CD8-positive, alpha-beta T cell (primary cell): ENCODE measurements at regions of chr1 and their contacts with region 1.

Region 1: GRCh38 chr1:2525920-2526823 is at the start of gene PANK4:
- DNase-seq: peak; percentile 77 to 96 (median 87)
- ATAC-seq: peak; percentile 85
- H3K4me3 ChIP-seq: peak within 1 kb of the TSS; percentile 85 to 98
- H3K4me3 Mint-ChIP-seq: peak within 1 kb of the TSS; percentile 98
- H3K27ac ChIP-seq: peak within 1 kb of the TSS; percentile 50 to 76
- H3K27ac Mint-ChIP-seq: peak within 1 kb of the TSS; percentile 97
- H3K4me1 ChIP-seq: peaks cover 66% of the 10 kb centered on the region
- H3K4me1 Mint-ChIP-seq: peaks cover 49% of the 10 kb centered on the region
- H3K27me3 ChIP-seq: peaks cover 7 to 14% of the 10 kb centered on the region in 2 experiments
- H3K27me3 Mint-ChIP-seq: peaks cover 2% of the 10 kb centered on the region
- CTCF ChIP-seq: no peak
- total RNA-seq, gene PANK4: 44.1 to 44.8 TPM

Region 2: GRCh38 chr1:1919304-1920056 is 606.7 kb before region 1 on chr1:
- CTCF ChIA-PET with region 1: no interaction called
- POLR2A ChIA-PET with region 1: no interaction called
- intact Hi-C with region 1: loop called in 1 of 2 experiments (anchors 10 kb)
- DNase-seq: peak; percentile 97 to 100 (median 99)
- ATAC-seq: peak; percentile 89
- H3K4me3 ChIP-seq: peak overlapping the region; percentile 39 to 74
- H3K4me3 Mint-ChIP-seq: peak overlapping the region; percentile 47
- H3K27ac ChIP-seq: peak overlapping the region in 1 of 2 experiments; percentile 28
- H3K27ac Mint-ChIP-seq: peak overlapping the region; percentile 5
- H3K4me1 ChIP-seq: peaks cover 17% of the 10 kb centered on the region
- H3K4me1 Mint-ChIP-seq: peaks cover 3% of the 10 kb centered on the region
- H3K27me3 ChIP-seq: no peaks in the 10 kb centered on the region
- H3K27me3 Mint-ChIP-seq: no peaks in the 10 kb centered on the region
- CTCF ChIP-seq: no peak

Region 3: GRCh38 chr1:2205191-2205952 is 320.8 kb before region 1 on chr1:
- CTCF ChIA-PET with region 1: no interaction called
- POLR2A ChIA-PET with region 1: no interaction called
- intact Hi-C with region 1: loop called in 1 of 2 experiments (anchors 2 kb)
- DNase-seq: peak; percentile 91 to 97 (median 95)
- ATAC-seq: peak; percentile 93
- H3K4me3 ChIP-seq: peak overlapping the region; percentile 39 to 61
- H3K4me3 Mint-ChIP-seq: peak overlapping the region; percentile 69
- H3K27ac ChIP-seq: peak overlapping the region; percentile 19 to 47
- H3K27ac Mint-ChIP-seq: no peak overlapping the region
- H3K4me1 ChIP-seq: peaks cover 14% of the 10 kb centered on the region
- H3K4me1 Mint-ChIP-seq: peaks cover 8% of the 10 kb centered on the region
- H3K27me3 ChIP-seq: no peaks in the 10 kb centered on the region
- H3K27me3 Mint-ChIP-seq: no peaks in the 10 kb centered on the region
- CTCF ChIP-seq: no peak

Region 4: DNA sequence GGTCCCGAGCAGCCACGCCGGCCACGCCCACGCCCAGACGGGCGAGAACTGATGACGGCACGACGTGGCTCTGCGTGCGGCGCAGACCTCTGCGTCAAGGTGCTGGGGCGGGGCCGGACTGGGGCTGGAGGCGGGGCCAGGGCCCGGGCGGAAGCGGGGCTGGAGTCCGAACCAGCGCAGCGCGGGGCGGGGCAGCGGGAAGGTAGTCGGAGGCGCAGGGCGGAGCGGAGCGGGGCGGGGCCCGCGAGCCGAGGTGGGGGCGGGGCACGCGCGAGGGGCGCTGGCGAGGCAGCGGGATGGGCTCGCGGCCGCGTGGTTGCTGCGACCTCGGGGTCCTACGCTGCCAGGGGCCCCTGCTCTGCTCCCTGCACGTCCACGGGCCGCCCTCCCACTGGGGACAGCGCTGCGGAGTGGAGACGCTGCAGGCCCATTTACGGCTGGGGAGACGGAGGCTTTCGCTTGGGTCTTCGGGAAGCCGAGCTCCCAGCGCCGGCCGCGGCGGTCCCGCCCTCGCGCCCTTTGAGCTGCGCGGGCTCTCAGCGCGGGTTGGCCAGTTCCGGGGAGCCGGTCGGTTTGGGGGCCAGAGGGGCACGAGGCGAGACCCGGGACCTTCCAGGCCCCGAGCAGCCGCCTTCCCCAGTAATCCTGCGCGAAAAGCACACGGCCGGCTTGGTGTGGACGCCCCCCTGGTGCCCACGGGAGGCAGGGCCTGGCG is 113.5 kb before region 1 on chr1 and contains the start of gene PEX10:
- CTCF ChIA-PET with region 1: interaction called, 20 read pairs
- POLR2A ChIA-PET with region 1: interaction called, 17 read pairs
- intact Hi-C with region 1: loop called (anchors 1 kb)
- DNase-seq: peak; percentile 97 to 100 (median 99)
- ATAC-seq: peak; percentile 91
- H3K4me3 ChIP-seq: peak within 1 kb of the TSS; percentile 64 to 89
- H3K4me3 Mint-ChIP-seq: peak within 1 kb of the TSS; percentile 86
- H3K27ac ChIP-seq: peak within 1 kb of the TSS; percentile 81 to 93
- H3K27ac Mint-ChIP-seq: peak within 1 kb of the TSS; percentile 93
- H3K4me1 ChIP-seq: peaks cover 53% of the 10 kb centered on the region
- H3K4me1 Mint-ChIP-seq: peaks cover 40% of the 10 kb centered on the region
- H3K27me3 ChIP-seq: no peaks in the 10 kb centered on the region
- H3K27me3 Mint-ChIP-seq: no peaks in the 10 kb centered on the region
- CTCF ChIP-seq: no peak
- total RNA-seq, gene PEX10: 11.6 to 11.8 TPM

Region 5: GRCh38 chr1:2499986-2500596 is 26.1 kb before region 1 on chr1:
- CTCF ChIA-PET with region 1: interaction called, 6 read pairs
- POLR2A ChIA-PET with region 1: interaction called, 14 read pairs
- intact Hi-C with region 1: loop called in 1 of 2 experiments (anchors 2 kb)
- DNase-seq: peak in 5 of 9 experiments; percentile 22 to 60 (median 42)
- ATAC-seq: peak; percentile 22
- H3K4me3 ChIP-seq: no peak overlapping the region
- H3K4me3 Mint-ChIP-seq: no peak overlapping the region
- H3K27ac ChIP-seq: peak overlapping the region in 1 of 2 experiments; percentile 46
- H3K27ac Mint-ChIP-seq: peak overlapping the region; percentile 57
- H3K4me1 ChIP-seq: peaks cover 34% of the 10 kb centered on the region
- H3K4me1 Mint-ChIP-seq: peaks cover 33% of the 10 kb centered on the region
- H3K27me3 ChIP-seq: no peaks in the 10 kb centered on the region
- H3K27me3 Mint-ChIP-seq: no peaks in the 10 kb centered on the region
- CTCF ChIP-seq: no peak

Region 6: GRCh38 chr1:2556277-2556677 is 30.1 kb after region 1 on chr1 and contains the start of gene TNFRSF14:
- CTCF ChIA-PET with region 1: interaction called, 6 read pairs
- POLR2A ChIA-PET with region 1: interaction called, 19 read pairs
- intact Hi-C with region 1: no loop called
- DNase-seq: peak; percentile 50 to 92 (median 72)
- ATAC-seq: peak; percentile 75
- H3K4me3 ChIP-seq: peak within 1 kb of the TSS; percentile 67 to 99
- H3K4me3 Mint-ChIP-seq: peak within 1 kb of the TSS; percentile 99
- H3K27ac ChIP-seq: peak within 1 kb of the TSS; percentile 89 to 98
- H3K27ac Mint-ChIP-seq: peak within 1 kb of the TSS; percentile 99
- H3K4me1 ChIP-seq: peaks cover 37% of the 10 kb centered on the region
- H3K4me1 Mint-ChIP-seq: peaks cover 42% of the 10 kb centered on the region
- H3K27me3 ChIP-seq: no peaks in the 10 kb centered on the region
- H3K27me3 Mint-ChIP-seq: no peaks in the 10 kb centered on the region
- CTCF ChIP-seq: peak; percentile 19
- total RNA-seq, gene TNFRSF14: 158 to 160 TPM

Region 7: GRCh38 chr1:2642560-2643413 is 116.6 kb after region 1 on chr1:
- CTCF ChIA-PET with region 1: interaction called, 3 read pairs
- POLR2A ChIA-PET with region 1: no interaction called
- intact Hi-C with region 1: loop called (anchors 1 kb)
- DNase-seq: peak; percentile 88 to 97 (median 96)
- ATAC-seq: peak; percentile 84
- H3K4me3 ChIP-seq: peak overlapping the region; percentile 63 to 95
- H3K4me3 Mint-ChIP-seq: peak overlapping the region; percentile 85
- H3K27ac ChIP-seq: peak overlapping the region; percentile 91 to 93
- H3K27ac Mint-ChIP-seq: peak overlapping the region; percentile 88
- H3K4me1 ChIP-seq: peaks cover 17% of the 10 kb centered on the region
- H3K4me1 Mint-ChIP-seq: peaks cover 13% of the 10 kb centered on the region
- H3K27me3 ChIP-seq: no peaks in the 10 kb centered on the region
- H3K27me3 Mint-ChIP-seq: no peaks in the 10 kb centered on the region
- CTCF ChIP-seq: no peak